Stomach (tissue), 19 donors: ENCODE measurements at regions of chr16 and their contacts with region 1.

Region 1: GRCh38 chr16:81696961-81697615 is 82.0 kb upstream of the PLCG2 start:
- DNase-seq: peak; percentile 65 to 78
- H3K4me3 ChIP-seq: no peak overlapping the region
- H3K27ac ChIP-seq: peak overlapping the region; percentile 30 to 82 (median 67)
- H3K4me1 ChIP-seq: peaks cover 16 to 68% (median 38%) of the 10 kb centered on the region in 4 donors
- H3K27me3 ChIP-seq: no peaks in the 10 kb centered on the region
- CTCF ChIP-seq: peak in 5 of 7 experiments; percentile 40 to 62 (median 56)
- EP300 ChIP-seq: no peak
- POLR2A ChIP-seq: no peak

Region 2: DNA sequence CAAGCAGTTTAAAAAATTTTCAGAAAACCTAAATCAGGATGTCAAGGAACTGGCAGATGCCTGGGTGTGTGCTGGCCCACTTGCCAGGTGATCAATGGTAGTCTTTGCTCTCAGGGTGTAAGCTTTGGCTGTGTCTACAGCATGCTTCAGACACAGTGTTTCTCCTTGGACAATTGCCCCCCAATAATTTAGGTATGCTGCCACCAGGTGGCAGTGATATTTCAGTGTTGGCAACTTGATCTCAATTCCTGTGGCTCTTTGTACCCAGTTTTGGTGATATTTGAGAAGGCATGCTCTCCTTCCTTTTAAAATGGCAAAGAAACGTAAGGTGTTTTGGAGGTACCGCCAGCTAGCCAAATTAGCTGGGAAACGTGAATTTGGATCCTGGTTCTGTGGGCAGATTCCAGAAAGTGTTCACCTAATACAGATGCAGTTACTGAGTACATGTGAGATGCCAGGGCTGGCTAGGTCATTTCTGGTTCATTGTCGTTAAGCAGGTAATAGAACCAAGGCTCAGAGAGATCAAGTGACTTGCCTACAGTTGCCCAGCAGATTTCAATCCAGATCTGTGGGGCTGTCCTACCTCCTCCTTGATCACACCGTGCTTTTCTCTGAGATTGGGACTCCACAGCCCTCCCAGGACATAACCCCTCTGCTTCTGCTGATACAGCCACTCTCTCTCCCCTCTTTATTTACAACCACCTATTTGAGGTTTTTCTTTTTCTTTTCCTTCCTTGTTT is 73.6 kb before region 1 on chr16:
- intact Hi-C with region 1: loop called (anchors 10 kb)
- DNase-seq: peak; percentile 57 to 75
- H3K4me3 ChIP-seq: no peak overlapping the region
- H3K27ac ChIP-seq: no peak overlapping the region
- H3K4me1 ChIP-seq: peaks cover 15 to 49% (median 31%) of the 10 kb centered on the region in 4 donors
- H3K27me3 ChIP-seq: no peaks in the 10 kb centered on the region
- CTCF ChIP-seq: peak in 5 of 7 experiments; percentile 43 to 72 (median 57)
- EP300 ChIP-seq: no peak
- POLR2A ChIP-seq: no peak